ENCODE measurements at regions of chr5 and their contacts with region 1.

Region 1: DNA sequence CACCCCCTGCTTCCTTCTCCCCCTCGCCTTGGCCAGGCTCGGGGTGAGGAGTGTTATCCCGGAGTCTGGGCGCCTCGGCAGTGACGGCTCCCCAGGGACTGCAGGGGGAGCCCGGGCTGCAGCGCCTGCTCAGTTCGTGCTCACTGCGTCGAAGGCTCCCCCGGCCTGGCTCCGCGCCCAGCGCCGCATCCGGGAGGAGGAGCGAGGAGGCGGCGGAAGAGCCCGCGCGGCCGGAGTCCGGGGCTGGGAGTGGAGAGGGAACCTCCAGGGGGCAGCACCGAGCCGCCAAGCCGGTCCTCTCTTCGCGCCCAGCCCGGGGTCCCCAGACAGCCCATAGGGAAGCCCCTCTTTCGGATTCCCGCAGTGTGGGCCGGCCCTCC is 1.3 kb upstream of the EGR1 start:
- DNase-seq: peak; percentile 98
- H3K4me3 Mint-ChIP-seq: peak overlapping the region; percentile 90
- H3K27ac Mint-ChIP-seq: peak overlapping the region; percentile 93
- H3K4me1 Mint-ChIP-seq: peaks cover 47% of the 10 kb centered on the region
- H3K27me3 Mint-ChIP-seq: peaks cover 6% of the 10 kb centered on the region

Region 2: DNA sequence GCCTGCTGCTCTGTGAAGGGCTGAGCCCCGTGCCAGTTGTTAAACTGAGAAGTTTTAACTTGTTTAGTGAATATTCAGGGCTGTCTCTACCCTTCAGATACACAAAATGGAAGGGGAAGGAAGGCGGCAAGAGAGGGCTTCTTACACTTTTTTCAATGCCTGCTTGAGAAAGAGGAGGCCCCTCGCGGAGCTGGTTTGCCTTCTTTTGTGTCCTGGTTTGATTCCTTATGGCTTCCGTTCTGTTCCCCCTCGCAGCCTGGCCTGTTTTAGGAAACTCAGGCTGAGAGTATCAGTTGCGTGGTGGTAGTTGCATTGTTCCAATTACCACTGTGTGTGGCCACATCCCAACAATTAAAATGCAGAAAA is 124.9 kb before region 1 on chr5:
- intact Hi-C with region 1: no loop called
- DNase-seq: no peak
- H3K4me3 Mint-ChIP-seq: peak overlapping the region; percentile 80
- H3K27ac Mint-ChIP-seq: peak overlapping the region; percentile 91
- H3K4me1 Mint-ChIP-seq: peaks cover 40% of the 10 kb centered on the region
- H3K27me3 Mint-ChIP-seq: no peaks in the 10 kb centered on the region

Region 3: DNA sequence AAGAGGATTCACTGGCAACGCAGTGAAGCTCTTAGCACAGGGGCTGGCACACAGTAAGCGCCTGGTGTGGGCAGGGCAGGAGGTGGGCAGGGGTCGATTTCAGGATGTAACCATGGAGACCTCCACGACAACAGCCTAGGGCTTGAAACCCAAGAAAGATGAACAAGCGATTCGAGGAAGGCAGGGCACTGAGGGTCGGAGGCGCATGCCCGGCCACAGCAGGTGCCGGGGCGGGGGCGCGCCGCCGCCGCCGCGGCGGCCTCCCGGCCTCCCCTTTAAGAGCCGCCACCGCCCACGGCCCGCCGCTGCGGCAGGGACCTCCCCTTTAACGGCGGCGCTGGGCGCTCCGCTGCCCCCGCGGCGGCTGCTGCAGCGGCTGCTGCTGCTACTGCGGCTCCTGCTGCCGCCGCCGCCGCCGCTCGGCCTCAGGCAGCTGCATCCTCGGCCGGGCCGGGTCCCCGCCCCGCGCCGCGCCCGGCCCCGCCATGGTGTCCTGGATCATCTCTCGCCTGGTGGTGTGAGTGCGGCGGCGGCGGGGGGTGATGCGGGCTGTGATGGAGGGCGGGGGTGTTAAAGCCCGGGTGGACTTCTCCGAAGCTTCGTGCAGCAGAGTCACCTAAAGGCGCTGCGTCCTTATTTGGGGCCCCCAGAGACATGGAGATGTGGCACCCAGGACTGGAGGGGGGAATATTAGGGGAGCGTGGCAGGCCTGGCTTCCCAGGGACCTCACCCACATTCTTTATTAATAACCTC is 25.1 kb before region 1 on chr5 and contains the start of gene REEP2:
- intact Hi-C with region 1: loop called (anchors 1 kb)
- DNase-seq: peak; percentile 90
- H3K4me3 Mint-ChIP-seq: peak within 1 kb of the TSS; percentile 81
- H3K27ac Mint-ChIP-seq: peak within 1 kb of the TSS; percentile 76
- H3K4me1 Mint-ChIP-seq: peaks cover 12% of the 10 kb centered on the region
- H3K27me3 Mint-ChIP-seq: peaks cover 3% of the 10 kb centered on the region
- total RNA-seq, gene REEP2: 3.5 and 4.6 TPM in 2 replicates

Region 4: GRCh38 chr5:138449501-138450239 is 14.3 kb before region 1 on chr5:
- intact Hi-C with region 1: loop called (anchors 1 kb)
- DNase-seq: peak; percentile 95
- H3K4me3 Mint-ChIP-seq: peak overlapping the region; percentile 69
- H3K27ac Mint-ChIP-seq: peak overlapping the region; percentile 53
- H3K4me1 Mint-ChIP-seq: peaks cover 5% of the 10 kb centered on the region
- H3K27me3 Mint-ChIP-seq: no peaks in the 10 kb centered on the region

Region 5: DNA sequence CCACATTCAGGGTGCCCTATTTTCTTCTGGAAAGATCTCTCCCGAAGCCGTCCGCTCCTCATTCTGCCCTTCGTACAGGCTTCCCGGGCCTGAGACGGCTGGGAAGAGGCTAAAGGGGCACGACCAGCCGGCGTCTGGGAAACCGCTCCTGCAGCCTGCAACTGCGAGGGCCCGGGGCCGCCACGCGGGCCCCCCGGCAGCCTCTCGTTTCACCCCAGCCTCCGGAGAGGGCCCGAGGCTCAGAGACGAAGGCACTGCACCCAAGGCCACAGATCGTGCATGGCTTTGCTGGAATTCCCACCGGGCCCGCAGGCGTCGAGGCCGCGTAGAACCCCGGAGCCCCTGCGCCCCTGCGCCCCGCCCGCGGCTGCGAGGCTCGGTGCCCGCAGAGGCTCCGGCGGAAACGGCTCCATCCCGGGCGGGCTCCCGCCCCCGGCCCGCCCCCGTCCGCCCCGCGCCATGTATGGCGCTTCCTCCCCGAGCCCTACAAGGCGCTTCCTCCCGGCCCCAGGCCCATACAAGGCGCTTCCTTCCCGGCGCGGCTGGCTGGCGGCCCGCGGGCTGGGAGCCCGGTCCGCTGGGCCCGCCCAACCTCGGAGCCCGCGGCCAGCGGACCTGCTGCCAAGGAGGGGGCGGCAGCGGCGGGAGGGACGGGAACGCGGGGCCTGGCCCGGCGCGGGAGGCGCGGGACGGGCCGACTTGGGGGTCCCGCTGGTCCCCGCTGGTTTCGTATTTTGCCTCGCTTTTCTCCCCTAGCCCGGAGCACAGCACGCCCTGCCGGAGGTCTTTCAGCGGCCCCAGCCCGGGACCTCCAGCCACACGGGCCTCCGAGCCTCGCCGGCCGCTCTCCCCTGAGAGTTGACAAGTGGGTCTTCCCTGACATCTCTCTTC is 27.9 kb after region 1 on chr5:
- intact Hi-C with region 1: loop called (anchors 1 kb)
- DNase-seq: peak; percentile 96
- H3K4me3 Mint-ChIP-seq: peak overlapping the region; percentile 90
- H3K27ac Mint-ChIP-seq: no peak overlapping the region
- H3K4me1 Mint-ChIP-seq: peaks cover 18% of the 10 kb centered on the region
- H3K27me3 Mint-ChIP-seq: peaks cover 30% of the 10 kb centered on the region

Region 6: GRCh38 chr5:138503487-138504270 is 39.7 kb after region 1 on chr5:
- intact Hi-C with region 1: loop called (anchors 2 kb)
- DNase-seq: peak; percentile 78
- H3K4me3 Mint-ChIP-seq: no peak overlapping the region
- H3K27ac Mint-ChIP-seq: no peak overlapping the region
- H3K4me1 Mint-ChIP-seq: no peaks in the 10 kb centered on the region
- H3K27me3 Mint-ChIP-seq: no peaks in the 10 kb centered on the region

Region 7: GRCh38 chr5:139293504-139294373 is 829.7 kb after region 1 on chr5 and contains the start of gene MATR3:
- intact Hi-C with region 1: loop called (anchors 10 kb)
- DNase-seq: peak; percentile 97
- H3K4me3 Mint-ChIP-seq: peak within 1 kb of the TSS; percentile 96
- H3K27ac Mint-ChIP-seq: peak within 1 kb of the TSS; percentile 97
- H3K4me1 Mint-ChIP-seq: peaks cover 38% of the 10 kb centered on the region
- H3K27me3 Mint-ChIP-seq: no peaks in the 10 kb centered on the region
- total RNA-seq, gene MATR3: 243 and 258 TPM in 2 replicates

Measured in activated CD4-positive, alpha-beta T cell treated with anti-CD3 and anti-CD28 coated beads, Interleukin-2, amount 10 ng/mL, durations not matched to agents 24 days and 14 days (primary cell).